Activated CD4-positive, alpha-beta memory T cell treated with anti-CD3 and anti-CD28 coated beads for 36 hours (primary cell): ENCODE measurements at regions of chr3 and their contacts with region 1.

Region 1: GRCh38 chr3:38257583-38257982 is 8.0 kb upstream of the SLC22A13 start:
- DNase-seq: no peak
- H3K4me3 Mint-ChIP-seq: no peak overlapping the region
- H3K27ac Mint-ChIP-seq: no peak overlapping the region
- H3K4me1 Mint-ChIP-seq: peaks cover 37% of the 10 kb centered on the region
- H3K27me3 Mint-ChIP-seq: no peaks in the 10 kb centered on the region

Region 2: DNA sequence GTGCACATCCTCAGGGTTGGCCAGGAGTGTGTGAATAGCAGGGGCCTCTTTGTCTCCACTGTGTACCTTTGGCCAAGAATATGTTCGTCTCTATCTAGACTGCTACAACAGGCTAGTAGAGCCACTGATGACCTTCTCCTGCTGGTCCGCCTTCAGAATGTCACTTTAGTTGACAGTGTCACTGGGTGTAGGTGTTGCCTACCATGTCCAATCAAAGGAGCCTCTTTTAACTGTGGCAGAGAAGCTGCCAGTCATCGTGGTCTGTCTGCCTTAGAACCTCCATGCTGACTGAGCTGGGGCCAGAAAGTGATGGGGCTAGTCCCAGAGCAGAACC is 52.1 kb before region 1 on chr3:
- CTCF ChIA-PET with region 1: no interaction called
- POLR2A ChIA-PET with region 1: no interaction called
- intact Hi-C with region 1: loop called (anchors 2 kb)
- DNase-seq: peak; percentile 54
- H3K4me3 Mint-ChIP-seq: no peak overlapping the region
- H3K27ac Mint-ChIP-seq: peak overlapping the region; percentile 2
- H3K4me1 Mint-ChIP-seq: peaks cover 59% of the 10 kb centered on the region
- H3K27me3 Mint-ChIP-seq: no peaks in the 10 kb centered on the region

Region 3: GRCh38 chr3:38487323-38487722 is 229.7 kb after region 1 on chr3:
- CTCF ChIA-PET with region 1: no interaction called
- POLR2A ChIA-PET with region 1: no interaction called
- intact Hi-C with region 1: no loop called
- DNase-seq: no peak
- H3K4me3 Mint-ChIP-seq: no peak overlapping the region
- H3K27ac Mint-ChIP-seq: no peak overlapping the region
- H3K4me1 Mint-ChIP-seq: no peaks in the 10 kb centered on the region
- H3K27me3 Mint-ChIP-seq: no peaks in the 10 kb centered on the region